ENCODE measurements at regions of chr2 and their contacts with region 1.

Region 1: GRCh38 chr2:200901459-200902072 is 12.4 kb downstream of the NIF3L1 start:
- DNase-seq: peak; percentile 67 to 84 (median 73)
- ATAC-seq: peak; percentile 98
- H3K4me3 ChIP-seq: no peak overlapping the region
- H3K27ac ChIP-seq: no peak overlapping the region
- H3K4me1 ChIP-seq: no peaks in the 10 kb centered on the region
- H3K27me3 ChIP-seq: no peaks in the 10 kb centered on the region
- CTCF ChIP-seq: peak; percentile 78 to 92 (median 89)
- EP300 ChIP-seq: no peak
- POLR2A ChIP-seq: no peak
- RAD21 ChIP-seq: peak; percentile 71 to 76

Region 2: DNA sequence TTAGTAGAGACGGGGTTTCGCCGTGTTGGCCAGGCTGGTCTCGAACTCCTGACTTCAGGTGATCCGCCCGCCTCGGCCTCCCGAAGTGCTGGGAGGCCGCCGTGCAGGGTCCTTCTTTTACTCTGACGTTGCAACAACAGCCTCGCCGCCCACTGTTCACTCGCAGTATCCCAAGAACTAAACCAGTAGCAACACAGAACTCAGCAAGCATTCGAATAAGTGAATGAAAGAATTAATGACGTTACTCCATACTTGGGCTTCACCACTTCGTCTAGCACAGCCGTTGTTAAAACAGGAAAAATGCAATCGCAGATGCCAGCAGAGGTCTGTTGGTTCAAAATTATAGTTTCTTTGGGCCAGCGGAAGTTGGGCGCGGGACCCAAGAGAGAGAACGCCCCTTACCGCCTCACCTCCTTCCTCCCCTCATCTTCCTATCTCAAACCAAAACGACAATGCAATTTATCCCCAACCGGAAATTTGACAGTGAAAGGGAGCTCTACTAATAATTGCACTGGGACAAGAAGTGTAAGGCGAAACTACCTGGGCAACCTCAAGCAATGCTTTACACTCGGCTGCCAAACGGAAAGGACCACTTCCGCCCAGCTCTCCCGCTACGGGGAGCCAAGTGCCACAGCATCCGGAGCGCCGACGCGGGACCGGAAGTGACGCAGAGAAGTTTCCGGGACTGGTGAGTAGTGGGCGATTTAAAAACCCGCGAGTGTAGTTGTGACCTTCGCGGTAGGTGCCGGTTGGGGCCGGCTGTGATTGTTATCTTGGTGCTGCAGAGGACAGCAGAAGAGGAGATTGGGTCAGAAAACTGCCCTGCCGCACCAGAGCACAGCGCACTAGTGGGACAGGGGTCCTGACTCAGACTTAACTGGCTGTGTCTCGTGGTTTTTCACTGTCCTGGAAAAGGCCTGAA is 12.6 kb before region 1 on chr2 and contains the starts of genes NIF3L1 and PPIL3:
- CTCF ChIA-PET with region 1: no interaction called
- POLR2A ChIA-PET with region 1: interaction called, 10 read pairs
- in situ Hi-C with region 1: no loop called
- intact Hi-C with region 1: no loop called
- DNase-seq: peak; percentile 80 to 98 (median 84)
- ATAC-seq: peak; percentile 89
- H3K4me3 ChIP-seq: peak within 1 kb of the TSS; percentile 46
- H3K27ac ChIP-seq: peak within 1 kb of the TSS; percentile 99
- H3K4me1 ChIP-seq: peaks cover 4 to 16% of the 10 kb centered on the region in 2 experiments; a peak in 4 of 5 replicates
- H3K27me3 ChIP-seq: no peaks in the 10 kb centered on the region
- CTCF ChIP-seq: no peak
- EP300 ChIP-seq: peak; percentile 49
- POLR2A ChIP-seq: peak; percentile 90
- RAD21 ChIP-seq: no peak; a peak in 1 of 4 replicates
- polyA plus RNA-seq, gene NIF3L1: 79.3 to 80.0 TPM
- polyA plus RNA-seq, gene PPIL3: 59.4 to 64.6 TPM

Region 3: DNA sequence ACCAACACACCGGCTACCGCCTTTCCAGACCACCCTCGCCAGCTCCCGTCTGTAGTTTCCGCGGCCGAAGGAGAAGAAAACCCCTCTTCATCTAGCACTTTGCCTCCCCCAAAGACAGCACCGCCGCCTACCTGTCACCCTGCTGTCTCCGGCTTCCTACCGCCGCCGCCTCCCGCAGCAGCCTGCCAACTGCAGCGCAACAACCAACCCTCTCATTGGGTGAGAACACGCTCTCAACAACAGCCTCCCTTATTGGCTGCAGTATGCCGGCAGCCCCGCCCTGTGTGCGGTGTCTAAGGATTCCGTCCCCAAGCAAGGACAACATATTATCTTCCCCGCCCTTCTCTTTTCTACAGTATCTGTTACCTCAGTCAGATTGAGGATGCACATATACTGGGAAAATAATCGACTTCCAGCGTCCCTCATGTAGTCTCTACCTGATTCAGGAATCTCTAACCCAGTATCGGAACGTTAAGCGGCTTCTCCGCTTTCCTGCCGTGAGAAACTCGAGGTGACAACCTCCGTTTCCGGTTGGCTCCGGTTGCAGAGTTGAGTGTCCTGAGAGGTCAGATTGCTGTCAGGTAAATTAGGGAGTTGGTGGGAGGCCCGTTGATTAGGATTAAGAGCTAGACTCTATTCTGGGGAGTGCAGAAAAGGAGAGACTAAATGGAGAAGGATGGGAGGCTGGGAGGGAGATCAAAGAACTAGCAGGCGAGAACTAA is 170.1 kb after region 1 on chr2 and contains the starts of genes HYCC2 and NDUFB3:
- CTCF ChIA-PET with region 1: interaction called, 11 read pairs
- POLR2A ChIA-PET with region 1: interaction called, 3 read pairs
- in situ Hi-C with region 1: loop called (anchors 10 kb)
- intact Hi-C with region 1: loop called (anchors 1 kb)
- DNase-seq: peak; percentile 94 to 98 (median 96)
- ATAC-seq: peak; percentile 92
- H3K4me3 ChIP-seq: peak within 1 kb of the TSS; percentile 83
- H3K27ac ChIP-seq: peak within 1 kb of the TSS; percentile 99
- H3K4me1 ChIP-seq: peaks cover 4 to 5% of the 10 kb centered on the region in 2 experiments; a peak in 3 of 5 replicates
- H3K27me3 ChIP-seq: no peaks in the 10 kb centered on the region
- CTCF ChIP-seq: peak; percentile 38 to 47 (median 42); a peak in 4 of 6 replicates
- EP300 ChIP-seq: 0 out of 2 replicates have a peak, but pooled peaks have one; percentile 17
- POLR2A ChIP-seq: peak; percentile 84
- RAD21 ChIP-seq: 0 out of 4 replicates have a peak, but pooled peaks of 1 of the 2 experiments have one; percentile 2
- polyA plus RNA-seq, gene HYCC2: 7.5 to 9.8 TPM
- polyA plus RNA-seq, gene NDUFB3: 679 to 786 TPM

Region 4: GRCh38 chr2:201158111-201158929 is 256.8 kb after region 1 on chr2:
- CTCF ChIA-PET with region 1: interaction called, 12 read pairs
- POLR2A ChIA-PET with region 1: no interaction called
- in situ Hi-C with region 1: no loop called
- intact Hi-C with region 1: loop called (anchors 1 kb)
- DNase-seq: peak; percentile 42 to 82 (median 60)
- ATAC-seq: peak; percentile 94
- H3K4me3 ChIP-seq: no peak overlapping the region
- H3K27ac ChIP-seq: peak overlapping the region; percentile 66
- H3K4me1 ChIP-seq: peaks cover 7 to 17% of the 10 kb centered on the region in 2 experiments; a peak in 4 of 5 replicates
- H3K27me3 ChIP-seq: no peaks in the 10 kb centered on the region
- CTCF ChIP-seq: peak; percentile 61 to 84 (median 75)
- EP300 ChIP-seq: peak; percentile 74
- POLR2A ChIP-seq: no peak
- RAD21 ChIP-seq: peak; percentile 86 to 90

Region 5: GRCh38 chr2:201176081-201176481 is 274.5 kb after region 1 on chr2:
- CTCF ChIA-PET with region 1: interaction called, 18 read pairs
- POLR2A ChIA-PET with region 1: no interaction called
- in situ Hi-C with region 1: loop called (anchors 5 kb)
- intact Hi-C with region 1: loop called (anchors 1 kb)
- DNase-seq: no peak
- ATAC-seq: no peak
- H3K4me3 ChIP-seq: no peak overlapping the region
- H3K27ac ChIP-seq: no peak overlapping the region
- H3K4me1 ChIP-seq: peaks cover 0 to 6% of the 10 kb centered on the region in 2 experiments; a peak in 3 of 5 replicates
- H3K27me3 ChIP-seq: no peaks in the 10 kb centered on the region
- CTCF ChIP-seq: no peak
- EP300 ChIP-seq: no peak
- POLR2A ChIP-seq: no peak
- RAD21 ChIP-seq: no peak

Region 6: GRCh38 chr2:201182650-201183364 is 281.2 kb after region 1 on chr2 and contains the start of gene CASP10:
- CTCF ChIA-PET with region 1: interaction called, 18 read pairs
- POLR2A ChIA-PET with region 1: no interaction called
- in situ Hi-C with region 1: loop called (anchors 5 kb)
- intact Hi-C with region 1: no loop called
- DNase-seq: peak; percentile 70 to 88 (median 78)
- ATAC-seq: peak; percentile 90
- H3K4me3 ChIP-seq: peak within 1 kb of the TSS; percentile 58
- H3K27ac ChIP-seq: peak within 1 kb of the TSS; percentile 84
- H3K4me1 ChIP-seq: peaks cover 5 to 14% of the 10 kb centered on the region in 2 experiments; a peak in 3 of 5 replicates
- H3K27me3 ChIP-seq: no peaks in the 10 kb centered on the region
- CTCF ChIP-seq: peak; percentile 48 to 81 (median 65)
- EP300 ChIP-seq: peak; percentile 58; the same call in 1 of the 2 replicates
- POLR2A ChIP-seq: peak; percentile 82
- RAD21 ChIP-seq: peak; percentile 59 to 84
- polyA plus RNA-seq, gene CASP10: 7.1 to 7.2 TPM

Region 7: DNA sequence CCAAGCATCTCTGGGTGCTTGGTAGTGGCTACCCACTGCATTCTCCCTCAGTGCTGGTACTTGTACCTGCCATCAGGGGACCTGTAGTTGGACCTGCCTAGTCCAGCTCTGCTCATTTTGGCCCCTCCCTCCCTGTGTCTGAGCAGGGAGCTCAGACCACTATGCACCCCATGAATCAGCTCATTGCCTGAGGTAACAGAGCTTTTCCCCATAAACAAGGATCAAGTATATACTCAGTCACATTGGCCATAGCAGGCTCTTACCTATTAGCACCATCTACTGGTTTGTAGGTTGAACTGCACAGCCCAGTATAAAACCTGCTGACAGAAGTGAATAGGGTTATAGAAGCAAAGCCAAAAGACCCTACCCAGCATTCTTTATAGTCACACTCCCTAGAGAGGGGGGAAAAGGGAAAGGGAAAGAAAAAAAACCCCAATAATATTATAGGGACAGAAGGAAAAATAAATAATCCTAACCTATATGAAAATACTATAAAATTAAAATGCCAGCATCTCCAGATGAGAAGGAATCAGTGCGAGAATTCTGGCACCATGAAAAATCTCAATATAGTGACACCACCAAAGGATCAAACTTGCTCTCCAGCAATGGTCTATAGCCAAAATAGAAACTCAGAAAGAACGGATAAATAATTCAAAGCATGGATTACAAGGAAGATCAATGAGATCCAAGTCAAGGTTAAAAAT is 462.4 kb after region 1 on chr2:
- CTCF ChIA-PET with region 1: no interaction called
- POLR2A ChIA-PET with region 1: no interaction called
- in situ Hi-C with region 1: loop called (anchors 25 kb)
- intact Hi-C with region 1: no loop called
- DNase-seq: peak; percentile 12 to 48 (median 18)
- ATAC-seq: peak; percentile 90
- H3K4me3 ChIP-seq: no peak overlapping the region
- H3K27ac ChIP-seq: no peak overlapping the region
- H3K4me1 ChIP-seq: no peaks in the 10 kb centered on the region
- H3K27me3 ChIP-seq: no peaks in the 10 kb centered on the region
- CTCF ChIP-seq: peak; percentile 61 to 77 (median 70)
- EP300 ChIP-seq: no peak
- POLR2A ChIP-seq: no peak
- RAD21 ChIP-seq: peak; percentile 45 to 77